ENCODE measurements at regions of chr20 and their contacts with region 1.

Region 1: DNA sequence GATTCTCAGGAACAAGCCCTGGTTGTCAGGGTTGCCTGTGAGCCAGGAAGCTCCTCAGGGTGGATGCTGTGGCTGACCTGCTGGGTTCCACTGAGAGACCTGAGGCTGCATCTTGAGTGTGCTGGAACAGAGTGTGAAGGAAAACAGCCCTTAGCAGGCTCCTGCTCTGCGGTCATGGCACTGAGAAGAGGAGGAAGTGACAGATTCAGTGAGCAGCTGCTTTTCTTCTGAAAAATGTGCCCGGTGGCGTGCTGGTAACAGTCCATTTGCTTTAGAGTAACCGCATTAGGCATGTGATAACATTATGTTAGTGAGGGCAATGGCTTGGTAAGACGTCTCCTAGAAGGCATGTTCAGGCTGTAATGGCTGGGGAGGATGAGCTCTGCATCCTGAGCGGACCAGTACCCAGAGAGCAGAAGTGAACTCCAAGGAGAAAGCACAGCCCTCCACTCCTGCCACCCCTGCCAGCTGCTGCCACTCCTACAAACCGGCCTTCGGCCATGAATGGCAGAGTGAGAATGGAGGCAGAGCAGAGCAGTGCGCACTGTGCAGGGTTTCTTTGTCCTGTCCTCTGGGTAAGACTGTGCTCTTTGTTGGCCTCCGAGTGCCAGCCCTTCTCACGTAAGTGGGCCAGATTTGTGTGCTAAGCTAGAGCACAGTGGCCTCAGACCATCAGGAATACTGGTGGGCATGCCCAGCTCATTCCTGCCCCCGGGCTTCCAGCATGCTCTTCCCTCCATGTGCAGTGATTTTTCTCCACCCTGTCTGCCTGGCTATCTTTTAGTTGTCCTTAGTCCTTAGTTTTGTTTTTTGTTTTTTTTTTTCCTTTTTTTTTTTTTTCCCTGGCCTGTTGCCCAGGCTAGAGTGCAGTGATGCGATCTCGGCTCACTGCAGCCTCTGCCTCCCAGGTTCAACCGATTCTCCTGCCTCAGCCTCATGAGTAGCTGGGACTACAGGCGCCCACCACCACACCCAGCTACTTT is 98.1 kb upstream of the VSTM2L start:
- DNase-seq: peak; percentile 85
- ATAC-seq: peak; percentile 82
- H3K4me3 ChIP-seq: peak overlapping the region in 4 of 5 experiments; percentile 5 to 58 (median 20)
- H3K4me3 Mint-ChIP-seq: peak overlapping the region; percentile 87
- H3K27ac ChIP-seq: peak overlapping the region; percentile 86 to 91
- H3K27ac Mint-ChIP-seq: peak overlapping the region; percentile 99
- H3K4me1 ChIP-seq: peaks cover 77 to 82% of the 10 kb centered on the region in 2 donors
- H3K4me1 Mint-ChIP-seq: peaks cover 77% of the 10 kb centered on the region
- H3K27me3 ChIP-seq: no peaks in the 10 kb centered on the region
- H3K27me3 Mint-ChIP-seq: no peaks in the 10 kb centered on the region
- CTCF ChIP-seq: no peak

Region 2: DNA sequence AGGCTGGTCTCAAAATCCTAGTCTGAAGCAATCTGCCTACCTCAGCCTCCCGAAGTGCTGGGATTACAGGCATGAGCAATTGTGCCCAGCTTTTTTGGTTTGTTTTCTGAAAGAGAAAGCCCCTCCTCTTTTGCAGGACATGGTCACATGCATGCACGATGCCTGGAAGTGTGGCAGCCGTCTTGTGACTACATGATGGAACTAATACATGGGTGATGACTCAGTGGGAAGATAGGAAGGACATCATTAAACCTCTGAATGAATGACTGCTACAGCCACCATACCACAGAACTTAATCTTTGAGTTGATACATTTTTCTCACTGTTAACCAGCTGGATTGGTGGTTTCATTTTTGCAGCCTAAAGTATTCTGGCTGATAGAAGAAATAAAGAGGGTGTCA is 124.5 kb before region 1 on chr20:
- CTCF ChIA-PET with region 1: no interaction called
- POLR2A ChIA-PET with region 1: no interaction called
- intact Hi-C with region 1: no loop called
- DNase-seq: no peak
- ATAC-seq: no peak
- H3K4me3 ChIP-seq: no peak overlapping the region
- H3K4me3 Mint-ChIP-seq: no peak overlapping the region
- H3K27ac ChIP-seq: no peak overlapping the region
- H3K27ac Mint-ChIP-seq: no peak overlapping the region
- H3K4me1 ChIP-seq: no peaks in the 10 kb centered on the region
- H3K4me1 Mint-ChIP-seq: no peaks in the 10 kb centered on the region
- H3K27me3 ChIP-seq: peaks cover 0 to 7% (median 1%) of the 10 kb centered on the region in 4 experiments
- H3K27me3 Mint-ChIP-seq: peaks cover 38% of the 10 kb centered on the region
- CTCF ChIP-seq: no peak

Region 3: DNA sequence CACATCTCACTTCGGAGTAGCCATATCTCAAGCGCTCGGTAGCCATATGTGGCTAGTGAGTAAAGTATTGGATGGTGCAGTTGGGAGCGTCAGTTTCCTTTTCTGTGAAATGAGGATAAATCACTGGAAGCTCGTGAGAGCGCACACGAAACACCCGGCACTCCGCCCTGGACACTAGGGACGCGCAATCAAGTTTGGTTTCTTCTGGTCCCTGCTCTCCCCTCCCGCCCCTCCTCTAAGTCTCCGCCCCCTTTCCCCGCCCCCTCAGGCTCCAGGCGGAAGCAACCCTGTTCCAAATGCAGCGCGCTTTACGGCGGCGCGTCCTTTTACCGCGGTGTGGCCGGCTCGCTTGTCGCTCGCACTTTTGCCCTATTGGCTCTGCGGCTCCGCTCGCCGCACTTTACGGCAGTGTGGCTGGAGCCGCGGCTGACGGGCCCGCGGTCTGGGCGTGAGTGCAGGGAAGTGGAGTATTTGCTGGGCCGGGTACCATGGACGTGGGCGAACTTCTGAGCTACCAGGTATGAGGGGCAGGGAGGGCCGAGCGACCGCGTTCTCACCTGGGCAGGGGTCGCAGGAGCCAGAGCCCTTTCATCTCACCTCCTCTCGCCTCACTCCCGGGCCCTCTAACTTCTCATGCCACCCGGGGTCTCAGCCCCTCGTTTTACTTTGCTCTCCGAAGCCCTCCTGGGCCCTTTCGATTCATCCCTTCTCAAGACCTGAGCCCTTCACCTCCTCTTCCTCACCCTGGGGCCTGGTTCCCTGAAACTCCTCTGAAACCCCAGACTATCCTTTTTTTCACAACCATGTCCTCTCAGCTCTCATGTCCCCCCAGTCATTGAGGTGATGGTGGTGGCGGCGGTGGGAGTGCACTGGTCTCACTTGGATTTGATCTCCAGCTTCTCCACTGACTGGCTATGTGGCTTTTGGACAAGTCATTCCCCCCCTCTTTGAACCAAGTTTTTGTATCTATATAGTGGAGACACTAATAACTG is 110.9 kb before region 1 on chr20 and contains the start of gene CTNNBL1:
- CTCF ChIA-PET with region 1: no interaction called
- POLR2A ChIA-PET with region 1: no interaction called
- intact Hi-C with region 1: loop called (anchors 1 kb)
- DNase-seq: peak; percentile 97
- ATAC-seq: peak; percentile 94
- H3K4me3 ChIP-seq: peak within 1 kb of the TSS; percentile 61 to 97 (median 67)
- H3K4me3 Mint-ChIP-seq: peak within 1 kb of the TSS; percentile 99
- H3K27ac ChIP-seq: peak within 1 kb of the TSS; percentile 7 to 75
- H3K27ac Mint-ChIP-seq: peak within 1 kb of the TSS; percentile 94
- H3K4me1 ChIP-seq: peaks cover 23 to 31% of the 10 kb centered on the region in 2 donors
- H3K4me1 Mint-ChIP-seq: peaks cover 45% of the 10 kb centered on the region
- H3K27me3 ChIP-seq: peaks cover 0 to 8% (median 6%) of the 10 kb centered on the region in 4 experiments
- H3K27me3 Mint-ChIP-seq: peaks cover 8% of the 10 kb centered on the region
- CTCF ChIP-seq: no peak
- total RNA-seq, gene CTNNBL1: 64.7 and 64.8 TPM in 2 replicates

Region 4: GRCh38 chr20:37758332-37758731 is 46.5 kb before region 1 on chr20:
- CTCF ChIA-PET with region 1: interaction called, 3 read pairs
- POLR2A ChIA-PET with region 1: no interaction called
- intact Hi-C with region 1: loop called (anchors 10 kb)
- DNase-seq: no peak
- ATAC-seq: no peak
- H3K4me3 ChIP-seq: no peak overlapping the region
- H3K4me3 Mint-ChIP-seq: no peak overlapping the region
- H3K27ac ChIP-seq: no peak overlapping the region
- H3K27ac Mint-ChIP-seq: no peak overlapping the region
- H3K4me1 ChIP-seq: peaks cover 4 to 8% of the 10 kb centered on the region in 2 donors
- H3K4me1 Mint-ChIP-seq: peaks cover 24% of the 10 kb centered on the region
- H3K27me3 ChIP-seq: no peaks in the 10 kb centered on the region
- H3K27me3 Mint-ChIP-seq: no peaks in the 10 kb centered on the region
- CTCF ChIP-seq: no peak

Region 5: GRCh38 chr20:37777012-37777950 is 27.6 kb before region 1 on chr20:
- CTCF ChIA-PET with region 1: interaction called, 13 read pairs
- POLR2A ChIA-PET with region 1: no interaction called
- intact Hi-C with region 1: loop called (anchors 1 kb)
- DNase-seq: peak; percentile 33
- ATAC-seq: no peak
- H3K4me3 ChIP-seq: peak overlapping the region in 1 of 5 experiments; percentile 28
- H3K4me3 Mint-ChIP-seq: peak overlapping the region; percentile 68
- H3K27ac ChIP-seq: peak overlapping the region in 1 of 2 donors; percentile 53
- H3K27ac Mint-ChIP-seq: peak overlapping the region; percentile 56
- H3K4me1 ChIP-seq: peaks cover 41 to 44% of the 10 kb centered on the region in 2 donors
- H3K4me1 Mint-ChIP-seq: peaks cover 49% of the 10 kb centered on the region
- H3K27me3 ChIP-seq: no peaks in the 10 kb centered on the region
- H3K27me3 Mint-ChIP-seq: no peaks in the 10 kb centered on the region
- CTCF ChIP-seq: no peak

Region 6: DNA sequence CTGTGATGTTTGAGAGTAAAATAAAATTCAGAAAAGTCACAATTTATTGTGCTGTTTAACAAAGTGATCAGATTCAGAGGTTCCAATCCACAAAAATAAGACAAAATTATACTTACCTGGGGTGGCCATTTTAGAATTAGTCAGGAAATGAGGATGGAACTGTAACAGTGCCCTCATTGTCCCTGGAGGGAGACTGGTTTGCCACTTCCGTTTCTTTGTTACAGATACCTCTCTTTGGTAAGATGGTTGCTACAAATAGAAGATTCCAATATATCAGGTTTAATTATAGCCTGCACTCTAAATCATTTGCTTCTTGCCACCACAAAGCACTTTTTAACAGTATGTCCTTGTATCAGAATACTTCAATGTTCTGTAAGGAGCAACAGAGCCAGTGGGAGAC is 15.5 kb before region 1 on chr20:
- CTCF ChIA-PET with region 1: interaction called, 3 read pairs
- POLR2A ChIA-PET with region 1: interaction called, 3 read pairs
- intact Hi-C with region 1: loop called (anchors 1 kb)
- DNase-seq: peak; percentile 42
- ATAC-seq: peak; percentile 64
- H3K4me3 ChIP-seq: peak overlapping the region in 1 of 5 experiments; percentile 31
- H3K4me3 Mint-ChIP-seq: peak overlapping the region; percentile 58
- H3K27ac ChIP-seq: peak overlapping the region; percentile 14 to 58
- H3K27ac Mint-ChIP-seq: peak overlapping the region; percentile 80
- H3K4me1 ChIP-seq: peaks cover 22 to 23% of the 10 kb centered on the region in 2 donors
- H3K4me1 Mint-ChIP-seq: peaks cover 33% of the 10 kb centered on the region
- H3K27me3 ChIP-seq: no peaks in the 10 kb centered on the region
- H3K27me3 Mint-ChIP-seq: no peaks in the 10 kb centered on the region
- CTCF ChIP-seq: no peak

Region 7: DNA sequence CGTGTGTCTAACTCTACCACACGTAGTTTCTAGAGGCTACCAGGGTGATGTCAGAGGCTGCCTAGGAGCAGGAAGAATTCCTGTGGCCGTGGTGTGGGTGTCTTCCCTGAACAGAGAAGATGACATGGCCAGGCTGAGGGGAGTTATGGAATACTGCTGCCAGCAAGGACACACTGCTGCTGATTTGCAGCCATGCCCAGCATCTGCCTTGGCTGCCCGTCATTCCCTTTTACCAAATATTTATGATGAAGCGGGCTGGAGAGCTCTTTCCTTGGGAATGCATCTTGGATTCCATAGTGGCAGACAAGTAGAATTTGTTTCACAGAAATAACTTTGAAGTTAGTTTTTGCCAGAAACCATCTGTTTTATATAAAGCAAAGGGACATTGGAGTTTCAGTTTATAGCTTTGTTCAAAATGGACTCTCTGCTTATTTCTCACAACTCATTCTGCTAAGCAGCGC is 17.3 kb after region 1 on chr20:
- CTCF ChIA-PET with region 1: interaction called, 3 read pairs
- POLR2A ChIA-PET with region 1: no interaction called
- intact Hi-C with region 1: loop called (anchors 2 kb)
- DNase-seq: no peak
- ATAC-seq: no peak
- H3K4me3 ChIP-seq: no peak overlapping the region
- H3K4me3 Mint-ChIP-seq: no peak overlapping the region
- H3K27ac ChIP-seq: no peak overlapping the region
- H3K27ac Mint-ChIP-seq: no peak overlapping the region
- H3K4me1 ChIP-seq: no peaks in the 10 kb centered on the region
- H3K4me1 Mint-ChIP-seq: peaks cover 4% of the 10 kb centered on the region
- H3K27me3 ChIP-seq: no peaks in the 10 kb centered on the region
- H3K27me3 Mint-ChIP-seq: no peaks in the 10 kb centered on the region
- CTCF ChIP-seq: no peak